HepG2 (cell line): ENCODE measurements at regions of chr4 and their contacts with region 1.

Region 1: GRCh38 chr4:187179086-187180058 is 455.7 kb upstream of the FAT1 start:
- DNase-seq: no peak
- ATAC-seq: no peak
- H3K4me3 ChIP-seq: no peak overlapping the region
- H3K27ac ChIP-seq: no peak overlapping the region
- H3K4me1 ChIP-seq: peaks cover 10% of the 10 kb centered on the region
- H3K27me3 ChIP-seq: peaks cover 0 to 30% of the 10 kb centered on the region in 2 experiments; a peak in 1 of 5 replicates
- CTCF ChIP-seq: no peak
- EP300 ChIP-seq: no peak
- POLR2A ChIP-seq: no peak
- RAD21 ChIP-seq: no peak

Region 2: DNA sequence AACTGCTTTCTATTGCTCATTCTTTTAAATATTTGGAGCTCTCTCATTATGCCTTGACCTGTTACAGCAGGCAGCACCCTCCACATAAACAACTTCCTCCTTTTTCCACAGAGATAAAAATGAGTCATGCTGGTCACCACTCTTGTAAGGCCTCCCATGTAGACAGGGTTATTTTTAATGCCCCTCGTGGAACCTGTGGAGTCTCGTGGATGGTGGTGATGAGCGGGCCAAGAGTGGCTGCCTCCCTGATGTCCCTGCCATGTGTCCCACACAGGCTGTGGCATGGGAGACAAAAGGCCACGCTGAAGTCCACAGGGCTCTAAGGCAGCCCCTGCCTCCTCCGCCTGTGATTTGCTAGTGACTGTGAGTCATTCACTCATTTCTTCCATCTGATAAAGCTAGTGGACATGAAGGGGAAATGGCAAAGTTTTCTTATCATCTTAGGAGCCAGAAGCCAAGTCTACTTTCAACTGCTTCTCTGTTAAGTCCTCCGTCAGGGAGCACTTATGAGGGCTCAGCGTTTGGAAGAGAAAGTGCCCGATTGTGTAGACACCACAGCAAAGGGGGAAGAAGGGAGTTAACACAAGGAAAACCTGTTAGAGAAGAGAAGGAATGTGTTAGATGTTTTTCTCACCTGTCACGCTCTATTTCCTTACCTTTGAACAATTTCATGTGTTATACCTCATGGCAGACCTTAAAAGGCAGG is 334.1 kb before region 1 on chr4:
- CTCF ChIA-PET with region 1: no interaction called
- POLR2A ChIA-PET with region 1: no interaction called
- in situ Hi-C with region 1: no loop called
- intact Hi-C with region 1: no loop called
- DNase-seq: peak; percentile 20
- ATAC-seq: peak; percentile 66
- H3K4me3 ChIP-seq: no peak overlapping the region
- H3K27ac ChIP-seq: no peak overlapping the region
- H3K4me1 ChIP-seq: peaks cover 31% of the 10 kb centered on the region
- H3K27me3 ChIP-seq: no peaks in the 10 kb centered on the region
- CTCF ChIP-seq: no peak
- EP300 ChIP-seq: no peak
- POLR2A ChIP-seq: no peak
- RAD21 ChIP-seq: no peak

Region 3: GRCh38 chr4:187128222-187128621 is 51.1 kb before region 1 on chr4:
- CTCF ChIA-PET with region 1: no interaction called
- POLR2A ChIA-PET with region 1: no interaction called
- in situ Hi-C with region 1: no loop called
- intact Hi-C with region 1: no loop called
- DNase-seq: no peak
- ATAC-seq: no peak
- H3K4me3 ChIP-seq: no peak overlapping the region
- H3K27ac ChIP-seq: no peak overlapping the region
- H3K4me1 ChIP-seq: no peaks in the 10 kb centered on the region
- H3K27me3 ChIP-seq: peaks cover 2 to 21% of the 10 kb centered on the region in 2 experiments; a peak in 3 of 5 replicates
- CTCF ChIP-seq: no peak
- EP300 ChIP-seq: no peak
- POLR2A ChIP-seq: no peak
- RAD21 ChIP-seq: no peak

Region 4: DNA sequence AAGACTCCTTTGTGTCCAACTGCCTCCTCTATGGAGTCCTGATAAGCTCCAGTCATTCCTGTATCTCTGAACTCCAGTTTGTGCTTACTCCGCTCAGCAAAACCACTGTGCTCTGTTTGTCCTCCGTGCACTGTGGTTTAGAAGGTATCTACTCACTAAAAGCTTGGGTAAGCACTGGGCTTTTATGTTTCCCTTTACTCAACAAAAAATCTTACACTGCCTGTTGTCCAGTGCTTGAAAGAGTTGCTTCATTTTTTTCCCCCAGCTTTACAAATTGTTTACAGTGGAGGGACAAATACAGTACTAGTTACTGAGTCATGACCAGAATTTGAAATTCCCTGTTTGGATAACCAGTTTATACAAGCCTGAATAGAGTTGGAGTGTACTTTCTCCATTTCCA is 89.6 kb after region 1 on chr4:
- CTCF ChIA-PET with region 1: no interaction called
- POLR2A ChIA-PET with region 1: no interaction called
- in situ Hi-C with region 1: no loop called
- intact Hi-C with region 1: no loop called
- DNase-seq: peak; percentile 16
- ATAC-seq: peak; percentile 29; the same call in 2 of the 3 replicates
- H3K4me3 ChIP-seq: no peak overlapping the region
- H3K27ac ChIP-seq: no peak overlapping the region
- H3K4me1 ChIP-seq: no peaks in the 10 kb centered on the region
- H3K27me3 ChIP-seq: no peaks in the 10 kb centered on the region
- CTCF ChIP-seq: no peak
- EP300 ChIP-seq: no peak
- POLR2A ChIP-seq: no peak
- RAD21 ChIP-seq: no peak

Region 5: DNA sequence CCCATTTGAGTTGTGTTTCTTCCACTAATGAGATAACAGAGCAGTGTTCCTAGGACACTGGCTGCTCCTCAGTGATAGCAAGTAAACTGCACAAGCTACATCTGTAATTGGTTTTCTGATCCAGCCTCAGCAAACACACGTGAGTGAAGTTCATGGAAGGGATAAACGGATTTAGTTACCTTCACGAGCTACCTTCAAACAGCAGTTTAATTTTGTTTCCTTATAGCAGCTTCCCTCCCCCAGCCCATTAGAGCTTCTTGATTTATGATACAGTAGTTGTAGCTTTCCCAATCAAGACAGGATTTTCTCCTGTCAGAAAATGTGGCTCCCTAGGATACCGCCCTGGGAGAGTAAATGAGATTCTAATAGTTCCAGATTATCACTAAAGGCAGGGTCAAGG is 178.4 kb after region 1 on chr4:
- CTCF ChIA-PET with region 1: no interaction called
- POLR2A ChIA-PET with region 1: no interaction called
- in situ Hi-C with region 1: no loop called
- intact Hi-C with region 1: loop called (anchors 10 kb)
- DNase-seq: no peak
- ATAC-seq: no peak
- H3K4me3 ChIP-seq: no peak overlapping the region
- H3K27ac ChIP-seq: no peak overlapping the region
- H3K4me1 ChIP-seq: no peaks in the 10 kb centered on the region
- H3K27me3 ChIP-seq: no peaks in the 10 kb centered on the region
- CTCF ChIP-seq: no peak
- EP300 ChIP-seq: no peak
- POLR2A ChIP-seq: no peak
- RAD21 ChIP-seq: no peak